Cardiac septum (tissue), 1 donor: ENCODE measurements at regions of chr17 and their contacts with region 1.

Region 1: DNA sequence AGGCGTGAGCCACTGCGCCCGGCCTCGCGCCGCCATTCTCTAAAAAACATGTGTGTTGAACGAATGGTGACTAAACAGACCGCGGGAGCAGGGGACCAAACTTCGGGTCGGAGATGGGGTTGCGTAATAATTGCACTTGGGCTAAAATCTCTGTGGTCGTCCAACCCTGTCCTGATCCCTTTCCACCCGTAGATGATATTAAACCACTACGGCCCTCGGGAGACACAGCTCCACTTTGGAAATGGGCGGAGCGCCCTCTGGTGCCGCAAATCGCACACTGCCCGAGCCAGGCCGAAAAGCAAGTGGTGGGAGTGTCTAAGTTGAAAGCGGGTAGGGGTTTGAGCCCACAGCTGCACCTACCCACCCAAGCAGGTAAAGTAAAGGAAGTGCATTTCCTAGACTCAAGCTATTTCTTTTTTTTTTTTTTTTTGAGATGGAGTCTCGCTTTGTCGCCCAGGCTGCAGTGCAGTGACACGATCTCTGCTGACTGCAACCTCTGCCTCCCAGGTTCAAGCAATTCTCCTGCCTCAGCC is 17.0 kb downstream of the CAVIN1 start:
- DNase-seq: peak; percentile 92

Region 2: GRCh38 chr17:42322382-42323267 is 83.4 kb before region 1 on chr17:
- intact Hi-C with region 1: loop called (anchors 2 kb)
- DNase-seq: peak; percentile 95

Region 3: GRCh38 chr17:42388381-42389134 is 17.5 kb before region 1 on chr17 and contains the start of gene STAT3:
- intact Hi-C with region 1: loop called (anchors 2 kb)
- DNase-seq: peak; percentile 100
- total RNA-seq, gene STAT3: 159 TPM

Region 4: DNA sequence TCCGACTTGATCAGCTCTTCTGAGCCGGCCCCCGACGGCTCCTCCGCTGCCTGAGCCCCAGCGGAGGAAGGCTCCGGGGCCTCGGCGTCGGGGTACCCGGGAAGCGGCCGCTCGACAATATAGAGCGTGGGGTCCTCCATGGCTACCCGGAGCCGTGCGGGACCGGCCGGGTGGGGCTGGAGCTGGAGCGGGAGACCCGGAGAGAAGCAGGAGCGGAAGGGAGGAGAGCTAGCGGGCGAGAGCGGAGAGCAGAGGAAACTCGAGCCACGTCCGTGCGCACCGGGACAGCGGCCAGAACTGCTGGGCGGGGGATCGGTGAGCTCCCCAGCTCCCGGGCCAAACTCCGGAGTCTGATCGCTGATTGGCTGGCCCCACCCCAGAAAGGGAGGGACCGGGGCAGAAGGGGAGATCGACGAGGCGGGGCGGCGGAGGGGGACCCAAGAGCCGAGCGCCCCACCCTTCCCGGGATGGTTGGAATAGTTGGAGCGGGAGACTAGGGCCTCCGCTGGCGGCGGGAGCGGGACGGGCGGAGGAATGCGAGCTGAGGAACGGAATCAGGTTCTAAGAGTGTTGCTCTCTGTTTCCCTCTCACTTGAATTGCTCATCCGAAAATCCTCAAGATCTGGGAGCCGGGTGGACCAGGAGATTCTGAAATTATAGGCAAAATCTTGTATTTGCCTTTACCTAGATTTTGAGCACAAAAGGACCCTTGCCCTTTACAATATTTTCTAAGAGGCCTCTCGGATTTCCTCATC is 17.1 kb after region 1 on chr17 and contains the start of gene CAVIN1:
- intact Hi-C with region 1: loop called (anchors 2 kb)
- DNase-seq: peak; percentile 99
- total RNA-seq, gene CAVIN1: 358 TPM